Activated B cell treated with CpG ODN at 0.5 μM for 24 hours (primary cell): ENCODE measurements at regions of chr5 and their contacts with region 1.

Region 1: DNA sequence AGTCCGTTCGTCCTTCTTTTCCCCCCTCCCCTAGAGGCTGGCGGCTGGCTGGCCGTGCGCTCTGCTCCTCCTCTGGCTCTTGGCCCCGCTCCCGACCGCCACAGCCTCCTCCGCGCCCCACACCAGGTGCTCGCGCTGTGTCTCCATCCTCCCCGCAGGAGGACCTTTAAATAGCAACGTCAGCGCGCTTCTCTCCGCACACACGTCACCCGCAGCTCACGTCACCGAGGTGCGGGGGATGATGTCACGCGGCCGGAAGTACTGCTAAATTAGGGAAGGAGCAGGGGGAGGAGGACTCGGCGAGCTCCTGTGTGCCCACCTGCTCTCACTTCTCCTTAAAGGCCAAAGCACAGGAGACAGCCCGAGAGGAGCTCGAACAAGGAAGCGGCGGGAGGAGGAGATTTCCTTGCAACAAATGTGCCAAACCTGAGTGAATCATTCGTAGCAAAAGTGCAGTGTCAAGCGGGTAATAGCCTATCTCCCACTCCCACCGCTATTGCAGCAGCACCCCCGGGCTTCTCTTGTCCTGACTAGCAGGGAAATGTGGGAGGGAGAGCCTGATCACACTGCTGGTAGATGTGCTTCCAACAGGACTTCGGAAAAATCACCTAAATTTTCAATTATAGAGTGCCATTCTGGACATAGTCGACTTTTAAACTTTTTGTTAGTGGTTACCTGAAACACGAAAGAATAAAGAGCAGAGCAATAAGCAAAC is 614 bp upstream of the HOMER1 start:
- DNase-seq: peak; percentile 85
- ATAC-seq: peak; percentile 77
- H3K4me3 Mint-ChIP-seq: peak overlapping the region; percentile 91
- H3K27ac Mint-ChIP-seq: peak overlapping the region; percentile 89
- H3K4me1 Mint-ChIP-seq: peaks cover 28% of the 10 kb centered on the region
- H3K27me3 Mint-ChIP-seq: peaks cover 24% of the 10 kb centered on the region
- CTCF ChIP-seq: no peak

Region 2: DNA sequence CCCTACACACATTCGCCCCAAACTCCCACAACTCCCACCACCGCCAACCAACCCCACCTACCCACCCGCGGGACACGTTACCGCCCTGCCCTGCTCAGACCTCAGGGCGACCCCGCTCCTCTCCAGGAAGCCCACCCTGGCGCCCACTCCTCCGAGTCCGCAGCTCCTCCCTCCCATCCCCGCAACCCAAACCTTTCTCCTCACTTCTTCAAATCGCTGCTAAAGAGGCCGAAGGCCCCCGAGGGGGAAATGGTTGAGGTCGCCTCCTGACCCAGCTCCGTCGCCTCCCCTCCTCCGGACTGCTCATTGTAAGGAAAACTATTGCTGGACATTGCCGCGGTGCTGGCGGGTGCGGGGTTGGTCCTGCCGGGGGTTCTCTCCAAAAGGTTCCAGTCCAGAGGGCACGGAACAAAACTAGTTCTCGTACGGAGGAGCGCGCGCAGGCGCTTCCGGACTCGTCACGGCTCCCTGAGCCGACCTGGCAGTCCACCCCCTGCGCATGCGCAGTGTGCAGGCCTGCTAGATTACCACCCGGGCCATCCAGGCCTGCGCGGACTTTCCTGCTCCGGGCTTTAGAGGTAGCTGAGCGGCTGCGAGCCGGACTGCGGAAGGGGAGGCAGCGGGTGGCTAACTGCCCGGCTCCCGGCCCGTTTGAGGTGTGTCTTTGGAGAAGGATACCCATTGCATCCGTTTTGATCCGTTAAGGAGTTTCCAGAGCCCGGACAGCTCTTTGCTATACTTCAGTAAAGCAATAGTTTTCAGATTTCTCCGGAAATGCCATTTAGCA is 1220.1 kb before region 1 on chr5 and contains the start of gene AP3B1:
- CTCF ChIA-PET with region 1: no interaction called
- POLR2A ChIA-PET with region 1: no interaction called
- intact Hi-C with region 1: loop called (anchors 10 kb)
- DNase-seq: peak; percentile 96
- ATAC-seq: peak; percentile 94
- H3K4me3 Mint-ChIP-seq: peak within 1 kb of the TSS; percentile 98
- H3K27ac Mint-ChIP-seq: peak within 1 kb of the TSS; percentile 98
- H3K4me1 Mint-ChIP-seq: peaks cover 44% of the 10 kb centered on the region
- H3K27me3 Mint-ChIP-seq: no peaks in the 10 kb centered on the region
- CTCF ChIP-seq: no peak
- total RNA-seq, gene AP3B1: 46.8 and 52.9 TPM in 2 replicates

Region 3: DNA sequence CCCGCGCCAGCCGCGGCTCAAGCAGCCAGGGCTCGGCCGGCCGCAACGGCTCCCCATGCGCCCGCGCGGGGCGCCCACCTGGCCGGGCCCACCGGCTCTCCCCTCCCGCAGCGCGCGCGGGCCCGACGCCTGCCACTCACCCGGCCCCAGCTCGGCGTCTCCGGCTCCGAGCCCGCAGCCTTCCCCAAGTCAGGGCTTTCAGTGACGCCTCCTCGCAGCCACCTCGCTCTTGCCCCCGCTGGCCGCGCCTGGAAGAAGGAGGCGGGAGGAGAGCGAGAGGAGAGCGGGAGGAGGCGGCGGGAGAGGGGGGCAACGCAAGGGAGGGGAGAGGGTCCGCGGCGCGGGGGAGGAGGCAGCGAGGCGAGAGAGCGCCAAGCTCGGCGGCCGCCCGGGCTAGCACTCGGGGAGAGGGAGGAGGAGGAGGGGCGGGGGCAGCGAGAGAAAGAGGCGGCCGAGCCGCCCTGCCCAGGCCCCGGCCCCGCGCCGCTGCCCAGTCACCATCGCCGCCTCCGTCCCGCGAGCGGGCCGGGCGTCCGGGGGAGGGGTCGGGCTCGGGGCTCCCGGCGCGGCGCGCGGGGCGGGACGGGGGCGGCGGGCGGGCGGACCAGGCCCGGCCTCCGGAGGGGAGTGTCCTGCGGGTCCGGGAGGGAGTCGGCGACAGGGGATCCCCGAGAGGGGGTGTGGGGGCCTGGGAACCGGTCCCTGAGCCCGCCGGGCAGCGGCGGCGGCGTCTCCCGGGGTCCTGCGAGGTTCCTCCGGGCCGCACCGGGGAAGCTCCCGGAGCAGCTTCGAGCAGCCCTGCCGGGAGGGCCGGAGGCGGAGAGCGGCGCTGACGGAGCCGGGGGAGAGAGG is 866.0 kb before region 1 on chr5 and contains the start of gene LHFPL2:
- CTCF ChIA-PET with region 1: no interaction called
- POLR2A ChIA-PET with region 1: no interaction called
- intact Hi-C with region 1: loop called (anchors 10 kb)
- DNase-seq: peak; percentile 63
- ATAC-seq: peak; percentile 69
- H3K4me3 Mint-ChIP-seq: peak within 1 kb of the TSS; percentile 83
- H3K27ac Mint-ChIP-seq: peak within 1 kb of the TSS; percentile 73
- H3K4me1 Mint-ChIP-seq: peaks cover 25% of the 10 kb centered on the region
- H3K27me3 Mint-ChIP-seq: no peaks in the 10 kb centered on the region
- CTCF ChIP-seq: no peak
- total RNA-seq, gene LHFPL2: 11.0 and 12.0 TPM in 2 replicates

Region 4: GRCh38 chr5:79229357-79230174 is 285.0 kb before region 1 on chr5:
- CTCF ChIA-PET with region 1: no interaction called
- POLR2A ChIA-PET with region 1: no interaction called
- intact Hi-C with region 1: no loop called
- DNase-seq: no peak
- ATAC-seq: peak; percentile 57
- H3K4me3 Mint-ChIP-seq: no peak overlapping the region
- H3K27ac Mint-ChIP-seq: no peak overlapping the region
- H3K4me1 Mint-ChIP-seq: peaks cover 7% of the 10 kb centered on the region
- H3K27me3 Mint-ChIP-seq: no peaks in the 10 kb centered on the region
- CTCF ChIP-seq: no peak

Region 5: DNA sequence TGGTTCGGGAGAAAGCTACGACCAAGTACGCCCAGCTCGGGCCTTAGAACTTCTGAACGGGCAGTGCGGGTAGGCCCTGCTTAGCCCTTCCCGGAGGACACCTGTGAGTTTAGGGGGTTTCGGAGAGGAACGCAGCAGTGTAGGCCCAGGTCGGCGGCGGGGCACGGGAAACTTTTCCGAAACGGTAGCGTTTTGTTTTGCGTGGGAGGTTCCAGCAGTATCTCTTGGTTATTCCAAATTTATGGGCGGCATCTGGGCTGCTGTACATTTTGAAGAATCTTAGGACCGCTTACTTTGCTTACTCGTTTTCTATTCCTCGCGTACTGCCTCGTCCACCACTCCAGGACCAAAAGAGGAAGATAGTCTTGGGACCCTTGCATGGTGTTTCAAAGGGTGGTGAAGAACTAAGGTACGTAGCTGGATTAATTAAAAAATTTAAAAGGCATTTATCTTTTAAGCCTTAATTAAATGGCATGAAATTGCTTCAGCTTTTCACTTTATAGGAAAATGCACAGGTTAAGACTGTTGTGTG is 98.2 kb after region 1 on chr5:
- CTCF ChIA-PET with region 1: no interaction called
- POLR2A ChIA-PET with region 1: interaction called, 11 read pairs
- intact Hi-C with region 1: loop called (anchors 1 kb)
- DNase-seq: no peak
- ATAC-seq: peak; percentile 16
- H3K4me3 Mint-ChIP-seq: peak overlapping the region; percentile 99
- H3K27ac Mint-ChIP-seq: peak overlapping the region; percentile 98
- H3K4me1 Mint-ChIP-seq: peaks cover 34% of the 10 kb centered on the region
- H3K27me3 Mint-ChIP-seq: peaks cover 2% of the 10 kb centered on the region
- CTCF ChIP-seq: no peak

Region 6: DNA sequence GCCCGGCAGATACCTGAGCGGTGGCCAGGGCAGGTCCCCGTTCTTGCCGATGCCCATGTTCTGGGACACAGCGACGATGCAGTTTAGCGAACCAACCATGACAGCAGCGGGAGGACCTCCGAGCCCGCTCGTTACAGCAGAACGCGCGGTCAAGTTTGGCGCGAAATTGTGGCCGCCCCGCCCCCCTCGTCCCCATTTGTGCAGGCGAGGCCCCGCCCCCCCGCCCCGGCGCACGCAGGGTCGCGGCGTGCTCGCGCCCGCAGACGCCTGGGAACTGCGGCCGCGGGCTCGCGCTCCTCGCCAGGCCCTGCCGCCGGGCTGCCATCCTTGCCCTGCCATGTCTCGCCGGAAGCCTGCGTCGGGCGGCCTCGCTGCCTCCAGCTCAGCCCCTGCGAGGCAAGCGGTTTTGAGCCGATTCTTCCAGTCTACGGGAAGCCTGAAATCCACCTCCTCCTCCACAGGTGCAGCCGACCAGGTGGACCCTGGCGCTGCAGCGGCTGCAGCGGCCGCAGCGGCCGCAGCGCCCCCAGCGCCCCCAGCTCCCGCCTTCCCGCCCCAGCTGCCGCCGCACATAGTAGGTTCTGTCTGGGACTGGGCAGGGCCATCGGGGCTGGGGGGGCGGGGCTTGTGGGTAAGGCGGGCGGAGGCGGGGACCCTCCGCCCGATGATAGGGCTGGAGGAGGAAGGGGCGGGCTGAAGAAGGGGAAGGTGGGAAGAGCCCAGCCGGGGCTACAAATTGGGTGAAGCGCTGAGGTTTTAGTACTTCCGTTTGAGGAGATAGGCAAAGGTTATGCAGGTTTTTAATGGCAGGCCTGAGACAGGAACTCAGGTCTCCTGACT is 1140.1 kb after region 1 on chr5 and contains the starts of genes DHFR and MSH3:
- CTCF ChIA-PET with region 1: no interaction called
- POLR2A ChIA-PET with region 1: interaction called, 4 read pairs
- intact Hi-C with region 1: loop called (anchors 2 kb)
- DNase-seq: peak; percentile 79
- ATAC-seq: peak; percentile 73
- H3K4me3 Mint-ChIP-seq: peak within 1 kb of the TSS; percentile 97
- H3K27ac Mint-ChIP-seq: peak within 1 kb of the TSS; percentile 99
- H3K4me1 Mint-ChIP-seq: peaks cover 26% of the 10 kb centered on the region
- H3K27me3 Mint-ChIP-seq: no peaks in the 10 kb centered on the region
- CTCF ChIP-seq: no peak
- total RNA-seq, gene DHFR: 11.1 and 12.7 TPM in 2 replicates
- total RNA-seq, gene MSH3: 22.9 and 24.0 TPM in 2 replicates